Heart right ventricle (tissue), 16 donors: ENCODE measurements at regions of chr3 and their contacts with region 1.

Region 1: DNA sequence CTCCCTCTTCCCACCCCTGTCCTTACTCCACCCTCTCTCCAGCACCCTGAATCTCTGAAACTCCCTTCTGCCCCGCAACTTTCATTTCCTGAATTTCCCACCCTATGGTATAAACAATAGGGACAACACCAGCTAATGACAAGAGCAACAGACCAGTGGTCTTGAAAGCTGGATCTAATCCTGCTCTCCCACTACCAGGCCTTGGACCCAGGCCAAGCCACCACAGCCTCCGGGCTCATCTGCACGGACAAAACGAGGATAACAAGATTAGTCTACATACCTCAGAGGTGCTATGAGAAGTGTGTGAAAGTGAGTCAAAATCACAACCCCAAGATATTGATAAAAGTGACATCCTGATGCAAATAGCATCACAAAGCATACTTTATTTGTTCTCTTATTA is 128.6 kb downstream of the ERC2 start:
- DNase-seq: no peak
- ATAC-seq: no peak
- H3K4me3 ChIP-seq: no peak overlapping the region
- H3K27ac ChIP-seq: no peak overlapping the region
- H3K4me1 ChIP-seq: no peaks in the 10 kb centered on the region
- H3K27me3 ChIP-seq: peaks cover 0 to 16% (median 6%) of the 10 kb centered on the region in 7 donors
- CTCF ChIP-seq: no peak

Region 2: DNA sequence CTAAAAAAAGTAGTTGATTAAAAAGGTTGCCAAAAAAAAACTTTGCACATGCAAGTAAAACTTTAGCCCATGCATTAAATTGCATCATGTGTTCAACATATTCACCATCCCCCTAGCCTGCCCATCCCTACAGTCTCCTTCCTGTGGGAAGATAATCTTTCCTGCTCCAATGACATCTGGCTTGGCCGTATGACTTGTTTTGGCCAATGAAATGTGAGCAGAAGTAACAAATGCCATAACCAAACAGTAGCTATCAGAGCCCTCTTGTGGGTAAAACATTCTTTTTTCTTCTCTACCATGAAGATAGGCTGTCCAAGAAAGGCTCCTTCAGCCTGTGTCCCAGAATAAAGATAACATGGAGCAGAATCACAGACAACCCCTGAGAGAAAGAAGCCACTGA is 113.3 kb after region 1 on chr3:
- intact Hi-C with region 1: loop called in 3 of 10 experiments (anchors 5 kb)
- DNase-seq: no peak
- ATAC-seq: no peak
- H3K4me3 ChIP-seq: no peak overlapping the region
- H3K27ac ChIP-seq: no peak overlapping the region
- H3K4me1 ChIP-seq: no peaks in the 10 kb centered on the region
- H3K27me3 ChIP-seq: peaks cover 0 to 11% (median 0%) of the 10 kb centered on the region in 7 donors
- CTCF ChIP-seq: no peak

Region 3: DNA sequence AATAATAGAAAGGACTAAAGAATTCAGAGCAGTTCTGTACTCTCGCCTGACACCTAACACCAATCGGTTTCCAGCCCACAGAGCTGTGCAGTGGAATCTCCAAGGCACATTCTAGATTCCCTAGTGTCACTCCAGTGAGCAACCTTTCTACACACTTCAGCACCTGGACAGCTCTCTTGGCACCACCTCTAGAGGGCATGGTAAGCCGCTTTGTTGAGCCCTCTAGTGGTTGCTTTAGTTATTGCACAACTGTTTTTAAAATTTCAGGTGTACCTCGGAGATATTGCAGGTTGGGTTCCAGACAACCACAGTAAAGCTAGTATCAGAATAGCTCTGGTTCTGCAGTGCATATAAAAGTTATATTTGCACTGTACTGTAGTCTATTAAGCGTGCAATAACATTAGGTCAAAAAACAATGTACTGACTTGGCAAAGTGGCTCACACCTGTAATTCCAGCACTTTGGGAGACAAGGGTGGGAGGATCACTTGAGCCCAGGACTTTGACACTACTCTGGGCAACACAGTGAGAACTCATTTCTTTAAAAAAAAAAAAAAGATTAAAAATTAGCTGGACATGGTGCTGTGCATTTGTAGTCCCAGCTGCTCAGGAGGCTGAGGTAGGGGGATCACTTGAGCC is 155.1 kb after region 1 on chr3:
- intact Hi-C with region 1: loop called in 6 of 10 experiments (anchors 2 to 10 kb)
- DNase-seq: peak; percentile 60 to 86
- ATAC-seq: peak; percentile 55 to 87 (median 84)
- H3K4me3 ChIP-seq: no peak overlapping the region
- H3K27ac ChIP-seq: no peak overlapping the region
- H3K4me1 ChIP-seq: no peaks in the 10 kb centered on the region
- H3K27me3 ChIP-seq: peaks cover 0 to 27% (median 0%) of the 10 kb centered on the region in 7 donors
- CTCF ChIP-seq: peak; percentile 73 to 93 (median 89)